MCF 10A (cell line): ENCODE measurements at regions of chr9 and their contacts with region 1.

Region 1: DNA sequence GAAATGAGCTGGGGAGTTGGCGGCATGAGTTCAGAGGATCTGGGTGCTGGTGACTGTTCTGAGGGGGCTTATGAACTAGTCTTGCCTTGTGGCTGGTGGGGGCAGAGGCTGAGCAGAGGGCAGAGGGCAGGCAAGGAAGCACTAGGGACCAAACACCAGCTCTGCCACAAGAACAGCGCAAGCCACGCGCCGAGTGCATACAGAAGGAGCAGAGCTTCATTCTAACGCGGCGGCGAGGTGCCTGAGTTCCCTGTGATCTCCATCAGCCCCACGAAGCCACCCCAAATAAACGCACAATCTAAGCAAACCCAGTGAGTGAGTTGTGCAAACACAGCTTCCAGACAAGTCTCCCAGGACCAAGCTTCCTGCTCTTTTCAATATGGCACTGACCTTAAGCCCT is 110.6 kb upstream of the ALDH1B1 start:
- DNase-seq: no peak
- H3K4me3 Mint-ChIP-seq: no peak overlapping the region
- H3K27ac Mint-ChIP-seq: no peak overlapping the region
- H3K4me1 Mint-ChIP-seq: no peaks in the 10 kb centered on the region
- H3K27me3 Mint-ChIP-seq: peaks cover 27% of the 10 kb centered on the region
- CTCF ChIP-seq: no peak

Region 2: GRCh38 chr9:38263532-38263931 is 18.4 kb before region 1 on chr9:
- CTCF ChIA-PET with region 1: interaction called, 10 read pairs
- POLR2A ChIA-PET with region 1: interaction called, 3 read pairs
- intact Hi-C with region 1: no loop called
- DNase-seq: peak; percentile 43
- H3K4me3 Mint-ChIP-seq: no peak overlapping the region
- H3K27ac Mint-ChIP-seq: no peak overlapping the region
- H3K4me1 Mint-ChIP-seq: no peaks in the 10 kb centered on the region
- H3K27me3 Mint-ChIP-seq: peaks cover 67% of the 10 kb centered on the region
- CTCF ChIP-seq: peak; percentile 48